ENCODE measurements at regions of chr13 and their contacts with region 1.

Region 1: GRCh38 chr13:42333613-42334328 is 61.8 kb downstream of the AKAP11 start:
- DNase-seq: no peak
- ATAC-seq: peak; percentile 92
- H3K4me3 ChIP-seq: no peak overlapping the region
- H3K27ac ChIP-seq: peak overlapping the region; percentile 73
- H3K4me1 ChIP-seq: peaks cover 18% of the 10 kb centered on the region
- H3K27me3 ChIP-seq: no peaks in the 10 kb centered on the region
- CTCF ChIP-seq: peak; percentile 74 to 87 (median 83); a peak in 5 of 6 replicates
- EP300 ChIP-seq: no peak
- POLR2A ChIP-seq: no peak
- RAD21 ChIP-seq: peak; percentile 98

Region 2: GRCh38 chr13:41763782-41764181 is 570.0 kb before region 1 on chr13:
- CTCF ChIA-PET with region 1: no interaction called
- POLR2A ChIA-PET with region 1: no interaction called
- RAD21 ChIA-PET with region 1: no interaction called
- SMC1A ChIA-PET with region 1: no interaction called
- in situ Hi-C with region 1: no loop called
- intact Hi-C with region 1: no loop called
- DNase-seq: no peak
- ATAC-seq: no peak
- H3K4me3 ChIP-seq: no peak overlapping the region
- H3K27ac ChIP-seq: no peak overlapping the region
- H3K4me1 ChIP-seq: no peaks in the 10 kb centered on the region
- H3K27me3 ChIP-seq: no peaks in the 10 kb centered on the region
- CTCF ChIP-seq: no peak
- EP300 ChIP-seq: no peak
- POLR2A ChIP-seq: no peak
- RAD21 ChIP-seq: no peak

Region 3: DNA sequence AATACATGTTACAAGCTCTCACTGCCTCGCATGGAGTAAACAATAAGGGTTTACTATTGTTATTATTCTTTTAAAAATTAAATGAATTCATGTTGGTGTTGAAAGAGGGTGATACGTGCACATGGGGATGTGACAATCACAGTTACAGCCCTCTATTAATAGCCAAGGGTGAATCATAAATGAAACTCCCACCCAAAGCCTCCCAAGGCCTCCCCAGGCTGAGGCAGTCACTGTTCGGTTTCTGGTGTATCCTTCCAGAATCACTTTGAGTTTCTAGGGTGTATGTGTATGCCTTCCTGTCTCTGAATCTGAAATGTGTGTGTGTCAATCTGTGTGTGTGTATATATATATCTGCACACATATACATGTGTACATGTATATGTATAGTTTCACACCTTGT is 11.6 kb after region 1 on chr13:
- CTCF ChIA-PET with region 1: interaction called, 9 read pairs
- POLR2A ChIA-PET with region 1: interaction called, 4 read pairs
- RAD21 ChIA-PET with region 1: interaction called, 3 read pairs
- SMC1A ChIA-PET with region 1: interaction called, 11 read pairs
- in situ Hi-C with region 1: no loop called
- intact Hi-C with region 1: no loop called
- DNase-seq: no peak
- ATAC-seq: peak; percentile 73
- H3K4me3 ChIP-seq: no peak overlapping the region
- H3K27ac ChIP-seq: no peak overlapping the region
- H3K4me1 ChIP-seq: peaks cover 9% of the 10 kb centered on the region; the same call in 1 of the 2 replicates
- H3K27me3 ChIP-seq: no peaks in the 10 kb centered on the region
- CTCF ChIP-seq: no peak
- EP300 ChIP-seq: no peak
- POLR2A ChIP-seq: no peak
- RAD21 ChIP-seq: no peak

Region 4: GRCh38 chr13:42497798-42498197 is 164.0 kb after region 1 on chr13:
- CTCF ChIA-PET with region 1: interaction called, 15 read pairs
- POLR2A ChIA-PET with region 1: interaction called, 3 read pairs
- RAD21 ChIA-PET with region 1: interaction called, 11 read pairs
- SMC1A ChIA-PET with region 1: interaction called, 14 read pairs
- in situ Hi-C with region 1: no loop called
- intact Hi-C with region 1: loop called (anchors 5 kb)
- DNase-seq: peak; percentile 88
- ATAC-seq: peak; percentile 90
- H3K4me3 ChIP-seq: no peak overlapping the region
- H3K27ac ChIP-seq: peak overlapping the region; percentile 85
- H3K4me1 ChIP-seq: peaks cover 33% of the 10 kb centered on the region
- H3K27me3 ChIP-seq: no peaks in the 10 kb centered on the region
- CTCF ChIP-seq: no peak
- EP300 ChIP-seq: peak in 1 of 2 experiments; percentile 69; a peak in 1 of 4 replicates
- POLR2A ChIP-seq: no peak
- RAD21 ChIP-seq: peak; percentile 36; the same call in 1 of the 2 replicates

Region 5: GRCh38 chr13:42594970-42595571 is 261.3 kb after region 1 on chr13:
- CTCF ChIA-PET with region 1: interaction called, 35 read pairs
- POLR2A ChIA-PET with region 1: no interaction called
- RAD21 ChIA-PET with region 1: interaction called, 25 read pairs
- SMC1A ChIA-PET with region 1: interaction called, 16 read pairs
- in situ Hi-C with region 1: no loop called
- intact Hi-C with region 1: loop called (anchors 1 kb)
- DNase-seq: peak; percentile 46
- ATAC-seq: peak; percentile 91
- H3K4me3 ChIP-seq: no peak overlapping the region
- H3K27ac ChIP-seq: no peak overlapping the region
- H3K4me1 ChIP-seq: no peaks in the 10 kb centered on the region; the same call in 1 of the 2 replicates
- H3K27me3 ChIP-seq: no peaks in the 10 kb centered on the region
- CTCF ChIP-seq: peak; percentile 60 to 86 (median 76)
- EP300 ChIP-seq: no peak
- POLR2A ChIP-seq: no peak
- RAD21 ChIP-seq: peak; percentile 95

Region 6: GRCh38 chr13:43786773-43787517 is 1453.2 kb after region 1 on chr13 and contains the start of gene ENOX1:
- CTCF ChIA-PET with region 1: no interaction called
- POLR2A ChIA-PET with region 1: no interaction called
- RAD21 ChIA-PET with region 1: no interaction called
- SMC1A ChIA-PET with region 1: no interaction called
- in situ Hi-C with region 1: loop called (anchors 25 kb)
- intact Hi-C with region 1: no loop called
- DNase-seq: no peak
- ATAC-seq: peak; percentile 74
- H3K4me3 ChIP-seq: peak within 1 kb of the TSS; percentile 73
- H3K27ac ChIP-seq: no peak within 1 kb of the TSS
- H3K4me1 ChIP-seq: no peaks in the 10 kb centered on the region
- H3K27me3 ChIP-seq: peaks cover 3 to 4% of the 10 kb centered on the region in 2 experiments; a peak in 3 of 4 replicates
- CTCF ChIP-seq: 0 out of 6 replicates have a peak, but pooled peaks of 1 of the 3 experiments have one; percentile 7
- EP300 ChIP-seq: no peak
- POLR2A ChIP-seq: no peak
- RAD21 ChIP-seq: 0 out of 2 replicates have a peak, but pooled peaks have one; percentile 13
- polyA plus RNA-seq, gene ENOX1: 0.11 to 0.26 TPM

Measured in GM12878 (cell line).